AG04449 (cell line): ENCODE measurements at regions of chr10 and their contacts with region 1.

Region 1: GRCh38 chr10:60816628-60817397 is 38.5 kb downstream of the CDK1 start:
- DNase-seq: peak; percentile 66
- H3K4me3 ChIP-seq: no peak overlapping the region
- CTCF ChIP-seq: peak; percentile 69

Region 2: GRCh38 chr10:60827791-60828488 is 11.1 kb after region 1 on chr10:
- CTCF ChIA-PET with region 1: interaction called, 19 read pairs
- POLR2A ChIA-PET with region 1: no interaction called
- DNase-seq: no peak
- H3K4me3 ChIP-seq: no peak overlapping the region
- CTCF ChIP-seq: no peak

Region 3: GRCh38 chr10:60950300-60950699 is 133.5 kb after region 1 on chr10:
- CTCF ChIA-PET with region 1: interaction called, 12 read pairs
- POLR2A ChIA-PET with region 1: no interaction called
- DNase-seq: no peak
- H3K4me3 ChIP-seq: no peak overlapping the region
- CTCF ChIP-seq: no peak

Region 4: GRCh38 chr10:60958892-60959601 is 142.2 kb after region 1 on chr10:
- CTCF ChIA-PET with region 1: interaction called, 18 read pairs
- POLR2A ChIA-PET with region 1: no interaction called
- DNase-seq: no peak
- H3K4me3 ChIP-seq: no peak overlapping the region
- CTCF ChIP-seq: no peak

Region 5: GRCh38 chr10:61188691-61189090 is 371.9 kb after region 1 on chr10:
- CTCF ChIA-PET with region 1: interaction called, 41 read pairs
- POLR2A ChIA-PET with region 1: no interaction called
- DNase-seq: no peak
- H3K4me3 ChIP-seq: no peak overlapping the region
- CTCF ChIP-seq: no peak

Region 6: GRCh38 chr10:61284222-61284890 is 467.5 kb after region 1 on chr10:
- CTCF ChIA-PET with region 1: interaction called, 13 read pairs
- POLR2A ChIA-PET with region 1: interaction called, 3 read pairs
- DNase-seq: peak; percentile 7
- H3K4me3 ChIP-seq: no peak overlapping the region
- CTCF ChIP-seq: peak; percentile 47